ENCODE measurements at regions of chr6 and their contacts with region 1.

Region 1: DNA sequence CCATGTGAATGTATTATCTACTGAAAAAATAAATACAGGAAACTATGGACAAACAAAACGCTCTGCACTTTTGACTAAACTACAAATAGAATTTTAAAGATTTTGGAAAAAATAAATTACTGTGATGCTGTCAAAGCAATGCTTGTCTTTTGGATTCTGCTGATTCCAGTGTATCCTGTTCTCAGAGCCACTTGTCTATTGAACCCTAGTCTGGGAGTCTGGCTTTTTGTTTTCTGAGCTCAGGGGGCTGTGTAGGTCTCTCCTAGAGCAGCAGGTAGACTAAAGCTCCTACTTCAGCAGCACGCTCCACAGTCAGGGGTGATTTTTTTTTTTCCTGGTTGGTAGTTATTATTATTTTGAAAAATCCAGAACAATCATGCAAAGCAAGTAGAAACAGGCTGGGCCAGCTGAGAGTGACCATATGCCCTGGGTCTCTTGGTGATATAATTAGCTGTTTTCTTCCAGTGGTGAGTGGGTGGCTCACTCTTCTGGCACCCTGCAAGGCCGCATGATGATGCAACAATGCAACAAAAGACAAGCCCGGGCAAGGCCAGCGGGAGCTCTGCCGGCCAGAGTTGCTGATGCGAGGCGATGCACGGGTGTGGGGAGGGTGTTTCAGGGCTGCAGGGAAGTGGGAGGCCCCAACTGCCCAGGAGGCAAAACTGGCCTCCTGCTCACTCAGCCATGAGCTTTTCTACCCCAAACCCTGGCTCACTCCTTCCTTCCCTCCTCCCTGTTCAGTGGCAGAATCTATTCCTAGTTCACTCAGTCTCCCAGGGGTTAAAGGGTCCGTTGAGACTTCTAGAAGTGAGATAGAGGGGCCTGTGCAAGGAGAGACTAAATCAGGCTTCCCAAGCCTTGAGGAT is 11.6 kb upstream of the CDKN1A start:
- DNase-seq: peak; percentile 91
- ATAC-seq: peak; percentile 86
- H3K4me3 ChIP-seq: peak overlapping the region; percentile 41; the same call in 1 of the 2 replicates
- H3K27ac ChIP-seq: peak overlapping the region; percentile 92
- H3K4me1 ChIP-seq: peaks cover 64% of the 10 kb centered on the region
- H3K27me3 ChIP-seq: no peaks in the 10 kb centered on the region
- CTCF ChIP-seq: no peak; a peak in 1 of 6 replicates
- EP300 ChIP-seq: peak; percentile 94 to 97
- POLR2A ChIP-seq: peak; percentile 49
- RAD21 ChIP-seq: no peak; the same call in 1 of the 2 replicates

Region 2: DNA sequence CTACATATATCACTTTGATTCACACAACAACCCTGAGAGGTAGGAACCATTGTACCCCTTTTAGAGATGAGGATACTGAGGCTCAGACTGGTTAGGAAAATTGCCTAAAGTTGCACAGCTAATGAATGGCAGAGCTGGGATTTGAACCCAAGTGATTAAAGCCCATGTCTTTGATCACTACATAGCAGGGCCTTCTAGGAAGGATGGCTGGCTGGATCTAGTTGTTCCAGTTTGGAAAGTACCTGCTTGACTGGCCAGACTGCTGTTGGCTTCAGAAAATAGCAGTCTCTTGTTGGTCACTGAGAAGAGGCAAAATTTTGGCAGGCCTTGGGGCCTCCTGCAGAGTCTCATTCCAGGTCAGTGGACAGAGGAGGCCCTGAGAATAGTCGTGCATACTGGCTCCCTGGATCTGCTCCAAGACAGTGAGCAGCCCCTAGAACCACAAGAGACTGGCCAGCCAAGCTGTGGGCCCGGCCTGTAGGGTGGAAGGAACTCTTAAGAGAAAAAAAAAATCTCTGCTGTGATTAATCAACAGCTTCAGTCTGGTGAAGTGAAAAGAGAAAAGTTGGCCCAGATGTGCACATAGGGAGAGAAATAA is 1307.1 kb before region 1 on chr6:
- CTCF ChIA-PET with region 1: no interaction called
- POLR2A ChIA-PET with region 1: no interaction called
- RAD21 ChIA-PET with region 1: no interaction called
- SMC1A ChIA-PET with region 1: no interaction called
- in situ Hi-C with region 1: no loop called
- intact Hi-C with region 1: no loop called
- DNase-seq: no peak
- ATAC-seq: no peak
- H3K4me3 ChIP-seq: no peak overlapping the region
- H3K27ac ChIP-seq: no peak overlapping the region
- H3K4me1 ChIP-seq: peaks cover 4% of the 10 kb centered on the region; the same call in 1 of the 2 replicates
- H3K27me3 ChIP-seq: no peaks in the 10 kb centered on the region
- CTCF ChIP-seq: no peak
- EP300 ChIP-seq: no peak
- POLR2A ChIP-seq: no peak
- RAD21 ChIP-seq: no peak

Region 3: DNA sequence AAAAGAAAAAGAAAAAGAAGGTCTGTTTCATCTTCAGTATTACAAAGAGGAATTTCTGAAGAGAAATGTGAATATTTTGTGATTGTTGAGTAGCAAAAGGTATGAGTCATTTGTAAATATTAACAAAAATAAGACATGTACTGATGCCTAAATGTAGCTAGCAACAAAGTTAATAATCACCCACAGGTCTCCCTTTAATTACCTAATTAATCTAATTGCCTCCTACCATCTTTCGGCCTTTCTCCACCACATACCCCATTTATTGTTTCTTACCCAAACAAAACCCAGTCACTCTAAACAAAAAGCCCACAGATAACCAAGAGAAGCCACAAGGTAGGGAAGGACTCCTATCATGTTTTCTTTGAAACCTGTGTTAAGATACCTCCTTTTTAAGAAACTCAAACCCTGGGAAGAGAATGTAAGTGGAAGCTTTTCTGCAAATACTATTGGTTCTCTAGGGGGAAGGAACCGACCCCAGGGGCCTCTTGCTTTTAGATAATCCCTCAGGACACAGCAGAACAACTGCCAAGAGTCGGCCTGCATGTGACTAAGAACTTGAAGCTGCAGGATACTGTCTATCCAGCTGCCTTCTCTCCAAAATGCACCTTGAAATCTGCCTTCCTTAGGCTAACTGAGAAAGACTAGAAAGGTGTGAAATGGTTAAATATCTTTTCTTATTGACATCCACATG is 103.6 kb before region 1 on chr6:
- CTCF ChIA-PET with region 1: no interaction called
- POLR2A ChIA-PET with region 1: no interaction called
- RAD21 ChIA-PET with region 1: no interaction called
- SMC1A ChIA-PET with region 1: no interaction called
- in situ Hi-C with region 1: no loop called
- intact Hi-C with region 1: no loop called
- DNase-seq: no peak
- ATAC-seq: no peak
- H3K4me3 ChIP-seq: no peak overlapping the region
- H3K27ac ChIP-seq: no peak overlapping the region
- H3K4me1 ChIP-seq: no peaks in the 10 kb centered on the region
- H3K27me3 ChIP-seq: no peaks in the 10 kb centered on the region
- CTCF ChIP-seq: no peak
- EP300 ChIP-seq: no peak
- POLR2A ChIP-seq: no peak
- RAD21 ChIP-seq: no peak

Region 4: DNA sequence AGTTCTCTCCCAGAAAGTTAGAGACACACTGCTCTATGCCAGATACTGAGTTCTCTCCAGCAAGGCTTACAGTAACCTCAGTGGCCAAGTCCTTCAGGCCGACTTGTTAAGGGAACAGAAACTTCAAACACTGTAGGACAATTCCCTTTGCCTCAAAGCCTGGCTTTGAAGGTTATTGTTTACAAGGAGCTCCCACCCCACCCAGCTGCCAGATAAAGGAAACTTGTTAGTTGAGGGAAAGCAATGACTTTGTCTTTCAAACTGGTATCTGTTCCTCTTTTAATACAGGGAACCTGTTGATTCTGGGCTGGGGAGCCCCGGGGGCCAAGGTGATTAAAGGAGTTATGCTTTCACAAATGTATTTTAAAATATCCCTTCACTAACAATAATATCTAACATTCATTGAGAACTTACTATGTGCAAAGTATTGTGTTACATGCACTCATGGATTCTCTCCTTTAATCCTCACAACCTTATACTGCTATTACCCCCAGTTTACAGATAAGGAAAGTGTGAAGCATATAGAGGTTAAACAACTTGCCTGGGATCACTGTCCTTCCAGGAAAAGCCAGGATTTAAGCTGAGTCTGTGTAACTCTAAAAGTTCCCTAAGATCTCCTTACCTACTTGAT is 16.0 kb before region 1 on chr6:
- CTCF ChIA-PET with region 1: interaction called, 17 read pairs
- POLR2A ChIA-PET with region 1: interaction called, 104 read pairs
- RAD21 ChIA-PET with region 1: interaction called, 45 read pairs
- SMC1A ChIA-PET with region 1: interaction called, 240 read pairs
- in situ Hi-C with region 1: no loop called
- intact Hi-C with region 1: no loop called
- DNase-seq: peak; percentile 69
- ATAC-seq: peak; percentile 95
- H3K4me3 ChIP-seq: no peak overlapping the region
- H3K27ac ChIP-seq: peak overlapping the region; percentile 52
- H3K4me1 ChIP-seq: peaks cover 42% of the 10 kb centered on the region
- H3K27me3 ChIP-seq: no peaks in the 10 kb centered on the region
- CTCF ChIP-seq: peak in 1 of 3 experiments; percentile 31; a peak in 1 of 6 replicates
- EP300 ChIP-seq: peak; percentile 59 to 90; a peak in 3 of 4 replicates
- POLR2A ChIP-seq: no peak
- RAD21 ChIP-seq: peak; percentile 34

Region 5: GRCh38 chr6:36714567-36714910 is 47.6 kb after region 1 on chr6:
- CTCF ChIA-PET with region 1: no interaction called
- POLR2A ChIA-PET with region 1: no interaction called
- RAD21 ChIA-PET with region 1: no interaction called
- SMC1A ChIA-PET with region 1: no interaction called
- in situ Hi-C with region 1: no loop called
- intact Hi-C with region 1: no loop called
- DNase-seq: no peak
- ATAC-seq: no peak
- H3K4me3 ChIP-seq: no peak overlapping the region
- H3K27ac ChIP-seq: no peak overlapping the region
- H3K4me1 ChIP-seq: peaks cover 4% of the 10 kb centered on the region; the same call in 1 of the 2 replicates
- H3K27me3 ChIP-seq: no peaks in the 10 kb centered on the region
- CTCF ChIP-seq: no peak
- EP300 ChIP-seq: no peak
- POLR2A ChIP-seq: no peak
- RAD21 ChIP-seq: no peak

Region 6: GRCh38 chr6:36743538-36744303 is 76.8 kb after region 1 on chr6:
- CTCF ChIA-PET with region 1: no interaction called
- POLR2A ChIA-PET with region 1: no interaction called
- RAD21 ChIA-PET with region 1: no interaction called
- SMC1A ChIA-PET with region 1: no interaction called
- in situ Hi-C with region 1: no loop called
- intact Hi-C with region 1: no loop called
- DNase-seq: no peak
- ATAC-seq: no peak
- H3K4me3 ChIP-seq: no peak overlapping the region
- H3K27ac ChIP-seq: no peak overlapping the region
- H3K4me1 ChIP-seq: no peaks in the 10 kb centered on the region; the same call in 1 of the 2 replicates
- H3K27me3 ChIP-seq: no peaks in the 10 kb centered on the region
- CTCF ChIP-seq: no peak
- EP300 ChIP-seq: no peak
- POLR2A ChIP-seq: no peak
- RAD21 ChIP-seq: no peak